CD8-positive, alpha-beta T cell (primary cell): ENCODE measurements at regions of chr2 and their contacts with region 1.

Region 1: GRCh38 chr2:32627814-32628579 is at the start of gene TTC27:
- DNase-seq: peak; percentile 87 to 96 (median 95)
- ATAC-seq: peak; percentile 99
- H3K4me3 ChIP-seq: peak within 1 kb of the TSS; percentile 82 to 89
- H3K4me3 Mint-ChIP-seq: peak within 1 kb of the TSS; percentile 93
- H3K27ac ChIP-seq: peak within 1 kb of the TSS; percentile 73
- H3K27ac Mint-ChIP-seq: peak within 1 kb of the TSS; percentile 90
- H3K4me1 ChIP-seq: no peaks in the 10 kb centered on the region
- H3K4me1 Mint-ChIP-seq: peaks cover 35% of the 10 kb centered on the region
- H3K27me3 ChIP-seq: no peaks in the 10 kb centered on the region
- H3K27me3 Mint-ChIP-seq: no peaks in the 10 kb centered on the region
- CTCF ChIP-seq: no peak
- total RNA-seq, gene TTC27: 9.6 to 12.1 TPM

Region 2: GRCh38 chr2:32039447-32040219 is 588.4 kb before region 1 on chr2 and contains the start of gene DPY30:
- CTCF ChIA-PET with region 1: no interaction called
- POLR2A ChIA-PET with region 1: no interaction called
- intact Hi-C with region 1: loop called (anchors 1 to 10 kb)
- DNase-seq: peak; percentile 76 to 95 (median 91)
- ATAC-seq: peak; percentile 96
- H3K4me3 ChIP-seq: peak within 1 kb of the TSS; percentile 81 to 83
- H3K4me3 Mint-ChIP-seq: peak within 1 kb of the TSS; percentile 94
- H3K27ac ChIP-seq: peak within 1 kb of the TSS; percentile 64 to 86
- H3K27ac Mint-ChIP-seq: peak within 1 kb of the TSS; percentile 98
- H3K4me1 ChIP-seq: peaks cover 8% of the 10 kb centered on the region
- H3K4me1 Mint-ChIP-seq: peaks cover 20% of the 10 kb centered on the region
- H3K27me3 ChIP-seq: no peaks in the 10 kb centered on the region
- H3K27me3 Mint-ChIP-seq: no peaks in the 10 kb centered on the region
- CTCF ChIP-seq: no peak
- total RNA-seq, gene DPY30: 9.6 to 10.8 TPM

Region 3: DNA sequence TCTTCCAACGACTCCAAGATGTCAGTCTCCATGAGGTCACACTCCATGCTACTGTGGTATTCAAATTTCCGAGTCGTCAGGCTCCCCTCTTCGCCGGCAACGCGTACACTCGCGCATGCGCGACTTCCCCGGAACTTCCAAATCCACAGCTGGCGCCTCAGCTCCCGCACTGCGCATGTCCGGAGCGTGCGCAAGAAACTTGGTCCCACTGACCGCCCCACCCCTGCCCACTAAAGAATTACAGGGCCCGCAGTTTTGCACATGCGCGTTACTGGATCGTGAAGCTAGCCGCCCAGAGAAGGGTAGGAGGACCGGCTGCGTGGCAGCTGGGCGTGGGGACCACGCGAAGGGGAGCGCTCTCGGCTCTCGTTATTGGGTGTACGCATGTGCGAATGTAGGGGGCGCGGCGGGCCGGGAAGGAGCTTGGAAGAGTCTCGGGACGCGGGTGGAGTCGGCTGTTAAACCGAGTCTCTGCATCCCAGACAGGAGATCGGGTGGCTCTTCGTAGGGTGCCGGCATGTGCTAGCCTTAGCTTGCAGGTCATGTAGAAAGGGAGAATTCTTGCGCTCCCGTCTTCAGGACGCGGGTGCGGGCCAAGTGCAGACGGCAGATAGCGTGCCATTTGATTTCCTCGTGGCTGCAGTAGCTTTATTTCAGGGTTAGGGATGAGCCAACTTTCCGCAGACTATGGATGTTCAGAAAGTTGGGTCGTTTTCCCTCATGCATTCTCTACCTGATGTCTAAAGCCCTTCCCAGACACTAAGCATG is 971.4 kb after region 1 on chr2 and contains the start of gene FAM98A:
- CTCF ChIA-PET with region 1: no interaction called
- POLR2A ChIA-PET with region 1: no interaction called
- intact Hi-C with region 1: loop called (anchors 1 to 5 kb)
- DNase-seq: peak; percentile 96 to 100 (median 99)
- ATAC-seq: peak; percentile 91
- H3K4me3 ChIP-seq: peak within 1 kb of the TSS; percentile 92 to 94
- H3K4me3 Mint-ChIP-seq: peak within 1 kb of the TSS; percentile 99
- H3K27ac ChIP-seq: peak within 1 kb of the TSS; percentile 83 to 85
- H3K27ac Mint-ChIP-seq: peak within 1 kb of the TSS; percentile 96
- H3K4me1 ChIP-seq: peaks cover 22% of the 10 kb centered on the region
- H3K4me1 Mint-ChIP-seq: peaks cover 34% of the 10 kb centered on the region
- H3K27me3 ChIP-seq: no peaks in the 10 kb centered on the region
- H3K27me3 Mint-ChIP-seq: no peaks in the 10 kb centered on the region
- CTCF ChIP-seq: no peak
- total RNA-seq, gene FAM98A: 15.9 to 21.0 TPM